ENCODE measurements at regions of chr14 and their contacts with region 1.

Region 1: DNA sequence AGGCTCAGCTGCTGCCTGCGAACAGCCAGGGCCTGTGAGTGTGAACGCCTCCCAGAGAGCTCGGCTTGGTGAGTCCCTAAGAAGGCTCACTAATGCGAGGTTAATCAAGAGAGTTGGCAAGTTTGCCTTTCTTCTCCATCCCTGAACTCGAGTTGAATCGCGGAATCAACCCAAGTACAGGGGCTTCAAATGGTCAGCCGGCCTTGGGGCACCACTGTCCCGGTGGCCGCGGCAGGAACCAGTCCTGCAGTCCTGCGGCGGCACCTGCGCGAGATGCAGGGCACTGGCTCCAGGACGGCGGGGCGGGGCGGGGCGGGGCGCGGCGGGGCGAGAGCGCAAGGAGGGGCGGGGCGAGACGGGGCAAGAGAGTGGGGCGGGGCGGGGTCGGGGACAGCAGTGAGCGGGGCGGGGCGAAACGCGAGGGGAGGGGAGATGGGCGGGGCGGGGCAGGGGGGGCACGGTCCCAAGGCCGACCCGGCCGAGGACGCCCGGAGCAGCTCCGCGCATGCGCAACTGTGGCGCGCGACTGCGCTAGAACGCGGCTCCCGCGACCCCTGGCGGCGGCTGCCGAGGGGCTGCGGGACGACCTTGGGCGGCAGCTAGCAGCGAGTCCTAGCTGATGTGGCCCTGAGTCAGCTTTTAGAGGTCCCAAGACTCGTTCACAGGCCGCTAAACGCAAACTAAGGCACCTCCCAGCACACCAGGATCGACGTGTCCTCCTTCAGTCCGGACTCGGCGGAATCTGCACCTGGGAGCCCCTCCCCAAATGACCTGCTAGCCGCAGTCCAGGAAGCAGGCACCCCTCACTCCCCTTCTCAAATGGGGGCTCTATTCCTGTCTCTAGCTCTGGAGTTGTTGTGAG is 58.0 kb downstream of the TTC7B start:
- DNase-seq: peak; percentile 94 to 95 (median 95)
- H3K4me3 ChIP-seq: peak overlapping the region; percentile 51 to 80 (median 75)
- H3K4me3 Mint-ChIP-seq: peak overlapping the region; percentile 80 to 88
- H3K27ac ChIP-seq: peak overlapping the region; percentile 47 to 86
- H3K27ac Mint-ChIP-seq: peak overlapping the region; percentile 35 to 87 (median 76)
- H3K4me1 ChIP-seq: peaks cover 15% of the 10 kb centered on the region in 2 donors
- H3K4me1 Mint-ChIP-seq: peaks cover 15% of the 10 kb centered on the region
- H3K27me3 ChIP-seq: no peaks in the 10 kb centered on the region
- H3K27me3 Mint-ChIP-seq: peaks cover 4 to 8% (median 5%) of the 10 kb centered on the region in 3 donors
- CTCF ChIP-seq: peak; percentile 86

Region 2: GRCh38 chr14:90301668-90302090 is 456.6 kb before region 1 on chr14:
- intact Hi-C with region 1: loop called in 1 of 2 experiments (anchors 10 kb)
- DNase-seq: peak in 1 of 3 donors; percentile 24
- H3K4me3 ChIP-seq: no peak overlapping the region
- H3K4me3 Mint-ChIP-seq: no peak overlapping the region
- H3K27ac ChIP-seq: peak overlapping the region in 1 of 2 donors; percentile 69
- H3K27ac Mint-ChIP-seq: peak overlapping the region in 3 of 7 donors; percentile 16 to 24 (median 18)
- H3K4me1 ChIP-seq: peaks cover 43 to 48% of the 10 kb centered on the region in 2 donors
- H3K4me1 Mint-ChIP-seq: peaks cover 44% of the 10 kb centered on the region
- H3K27me3 ChIP-seq: no peaks in the 10 kb centered on the region
- H3K27me3 Mint-ChIP-seq: peaks cover 0 to 3% (median 0%) of the 10 kb centered on the region in 3 donors
- CTCF ChIP-seq: peak; percentile 32

Region 3: DNA sequence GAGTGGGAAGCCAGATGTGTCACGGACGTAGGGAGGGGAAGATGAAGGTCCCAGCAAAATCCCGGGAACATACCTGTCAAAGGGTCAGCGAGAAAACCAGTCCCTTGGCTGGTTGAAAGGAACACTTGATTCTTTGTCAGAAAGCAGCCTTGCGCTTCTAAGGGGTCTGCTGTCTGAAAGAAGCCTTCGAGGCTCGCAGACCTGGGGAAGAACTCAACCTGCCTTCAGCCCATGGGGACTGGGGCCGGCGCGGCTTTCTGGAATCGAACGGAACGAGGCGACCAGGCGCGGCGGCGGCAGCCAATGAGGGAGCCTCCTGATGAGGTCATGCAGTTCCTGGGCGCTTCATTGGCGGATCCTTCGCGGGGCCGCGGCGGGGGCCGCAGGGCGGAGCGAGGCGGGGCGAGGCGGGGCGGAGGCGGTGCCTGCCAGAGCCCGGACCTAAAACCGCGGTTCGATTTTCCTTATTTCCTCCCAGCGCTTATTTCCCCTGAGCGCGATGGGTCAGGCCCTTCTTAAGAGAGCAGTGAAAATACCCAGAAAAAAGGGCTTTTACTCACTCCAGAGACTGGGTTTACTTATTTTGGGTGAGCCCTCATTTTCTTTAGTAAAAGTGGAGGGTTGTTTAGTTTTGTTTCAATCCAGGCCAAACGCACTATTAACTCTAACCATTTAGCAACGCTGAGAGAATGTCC is 69.8 kb after region 1 on chr14:
- intact Hi-C with region 1: loop called in 1 of 2 experiments (anchors 5 kb)
- DNase-seq: peak; percentile 77 to 88 (median 87)
- H3K4me3 ChIP-seq: peak overlapping the region; percentile 39 to 75 (median 44)
- H3K4me3 Mint-ChIP-seq: peak overlapping the region; percentile 72 to 85
- H3K27ac ChIP-seq: peak overlapping the region; percentile 86 to 90
- H3K27ac Mint-ChIP-seq: peak overlapping the region; percentile 90 to 95 (median 93)
- H3K4me1 ChIP-seq: peaks cover 20 to 23% of the 10 kb centered on the region in 2 donors
- H3K4me1 Mint-ChIP-seq: peaks cover 19% of the 10 kb centered on the region
- H3K27me3 ChIP-seq: no peaks in the 10 kb centered on the region
- H3K27me3 Mint-ChIP-seq: peaks cover 2 to 9% (median 6%) of the 10 kb centered on the region in 3 donors
- CTCF ChIP-seq: no peak

Measured in CD14-positive monocyte (primary cell).